IMR-90 (cell line): ENCODE measurements at regions of chr12 and their contacts with region 1.

Region 1: DNA sequence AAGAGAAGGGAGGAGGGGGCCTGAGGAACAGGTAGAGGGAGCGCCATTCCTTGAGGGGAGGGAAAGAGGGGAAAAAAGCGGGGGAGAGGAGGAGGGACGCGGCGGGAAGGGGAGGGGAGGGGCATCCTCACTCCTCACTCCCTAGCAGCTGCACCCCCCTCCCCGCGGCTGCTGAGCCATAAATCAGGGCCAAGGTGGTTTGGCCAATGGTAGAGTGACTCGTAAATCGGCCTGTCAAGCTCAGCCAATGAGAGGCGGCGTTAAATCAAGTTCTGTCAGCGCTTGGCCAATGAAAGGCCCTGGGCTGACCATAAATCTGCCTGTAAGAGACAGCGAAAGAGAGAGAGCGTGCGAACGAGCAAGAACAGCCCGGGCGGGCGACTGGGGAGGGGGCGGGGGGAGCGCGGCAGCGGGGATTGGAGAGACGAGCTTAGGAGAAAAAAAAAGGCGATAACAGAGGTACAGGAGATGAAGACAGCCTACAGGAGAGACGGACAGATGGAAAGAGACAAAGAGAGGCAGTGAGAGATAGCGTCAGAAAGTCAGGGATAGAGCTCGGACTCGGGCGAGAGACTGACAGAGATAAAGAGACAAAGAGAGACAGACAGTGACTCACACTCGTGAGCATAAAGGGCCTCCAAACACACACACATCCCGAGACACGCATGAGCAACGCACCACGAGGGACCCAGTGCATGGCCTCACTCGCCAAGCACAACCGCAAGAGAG is 5.1 kb downstream of the GPR84 start:
- DNase-seq: peak; percentile 100
- ATAC-seq: peak; percentile 89
- H3K4me3 ChIP-seq: peak overlapping the region; percentile 66
- H3K27ac ChIP-seq: peak overlapping the region; percentile 95
- H3K4me1 ChIP-seq: peaks cover 16% of the 10 kb centered on the region
- H3K27me3 ChIP-seq: no peaks in the 10 kb centered on the region
- CTCF ChIP-seq: no peak
- POLR2A ChIP-seq: peak; percentile 56; the same call in 1 of the 2 replicates
- RAD21 ChIP-seq: no peak

Region 2: GRCh38 chr12:54005853-54006686 is 353.1 kb before region 1 on chr12:
- CTCF ChIA-PET with region 1: no interaction called
- POLR2A ChIA-PET with region 1: no interaction called
- dilution Hi-C with region 1: no loop called
- in situ Hi-C with region 1: no loop called
- intact Hi-C with region 1: loop called (anchors 1 kb)
- DNase-seq: peak; percentile 62
- ATAC-seq: peak; percentile 93
- H3K4me3 ChIP-seq: no peak overlapping the region
- H3K27ac ChIP-seq: no peak overlapping the region
- H3K4me1 ChIP-seq: no peaks in the 10 kb centered on the region
- H3K27me3 ChIP-seq: peaks cover 90% of the 10 kb centered on the region
- CTCF ChIP-seq: peak; percentile 95
- POLR2A ChIP-seq: no peak
- RAD21 ChIP-seq: peak; percentile 93

Region 3: GRCh38 chr12:54220092-54220557 is 139.1 kb before region 1 on chr12:
- CTCF ChIA-PET with region 1: interaction called, 5 read pairs
- POLR2A ChIA-PET with region 1: no interaction called
- dilution Hi-C with region 1: no loop called
- in situ Hi-C with region 1: loop called (anchors 5 kb)
- intact Hi-C with region 1: loop called (anchors 1 kb)
- DNase-seq: peak; percentile 74
- ATAC-seq: peak; percentile 48
- H3K4me3 ChIP-seq: no peak overlapping the region
- H3K27ac ChIP-seq: no peak overlapping the region
- H3K4me1 ChIP-seq: peaks cover 20% of the 10 kb centered on the region
- H3K27me3 ChIP-seq: no peaks in the 10 kb centered on the region; the same call in 1 of the 2 replicates
- CTCF ChIP-seq: peak; percentile 81
- POLR2A ChIP-seq: no peak
- RAD21 ChIP-seq: peak; percentile 83

Region 4: DNA sequence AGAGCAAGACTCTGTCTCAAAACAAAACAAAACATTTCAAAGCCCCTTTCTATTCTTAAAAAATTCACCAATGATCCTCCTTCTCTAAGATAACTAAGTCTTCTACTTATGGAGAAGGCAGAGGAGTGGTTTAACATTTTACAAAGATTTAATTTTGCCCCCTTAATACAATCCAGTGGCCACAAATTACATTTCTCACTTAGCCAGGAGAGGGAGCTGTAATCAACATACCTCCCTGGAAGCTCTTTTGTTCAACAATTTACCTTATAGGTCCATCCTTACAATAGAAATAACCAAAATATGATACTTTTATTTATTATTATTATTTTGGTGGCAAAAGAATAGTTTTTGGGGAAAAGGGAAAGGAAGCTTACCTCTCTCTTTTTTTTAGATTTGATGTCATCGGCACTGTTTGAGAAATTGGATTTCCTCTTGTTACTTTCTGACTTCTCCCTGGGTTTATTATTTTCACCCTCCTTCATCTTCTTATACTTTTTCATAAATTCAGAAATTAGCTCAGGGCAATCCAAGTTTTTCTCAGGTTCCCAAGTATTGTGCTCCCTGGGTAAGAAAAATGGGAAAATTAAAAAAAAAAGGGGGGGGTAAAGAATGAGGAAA is 107.4 kb before region 1 on chr12:
- CTCF ChIA-PET with region 1: no interaction called
- POLR2A ChIA-PET with region 1: no interaction called
- dilution Hi-C with region 1: no loop called
- in situ Hi-C with region 1: no loop called
- intact Hi-C with region 1: loop called (anchors 1 kb)
- DNase-seq: peak; percentile 60
- ATAC-seq: peak; percentile 69
- H3K4me3 ChIP-seq: no peak overlapping the region
- H3K27ac ChIP-seq: no peak overlapping the region
- H3K4me1 ChIP-seq: no peaks in the 10 kb centered on the region
- H3K27me3 ChIP-seq: no peaks in the 10 kb centered on the region
- CTCF ChIP-seq: peak; percentile 78
- POLR2A ChIP-seq: no peak
- RAD21 ChIP-seq: peak; percentile 73

Region 5: GRCh38 chr12:54279866-54280467 is 79.2 kb before region 1 on chr12 and contains the start of gene CBX5:
- CTCF ChIA-PET with region 1: no interaction called
- POLR2A ChIA-PET with region 1: no interaction called
- dilution Hi-C with region 1: no loop called
- in situ Hi-C with region 1: no loop called
- intact Hi-C with region 1: loop called (anchors 1 kb)
- DNase-seq: peak; percentile 98
- ATAC-seq: peak; percentile 47
- H3K4me3 ChIP-seq: peak within 1 kb of the TSS; percentile 63
- H3K27ac ChIP-seq: peak within 1 kb of the TSS; percentile 82
- H3K4me1 ChIP-seq: peaks cover 3% of the 10 kb centered on the region
- H3K27me3 ChIP-seq: no peaks in the 10 kb centered on the region
- CTCF ChIP-seq: no peak
- POLR2A ChIP-seq: 0 out of 2 replicates have a peak, but pooled peaks have one; percentile 9
- RAD21 ChIP-seq: no peak
- total RNA-seq, gene CBX5: 40.9 and 66.9 TPM in 2 replicates

Region 6: GRCh38 chr12:54294152-54294952 is 64.8 kb before region 1 on chr12:
- CTCF ChIA-PET with region 1: interaction called, 3 read pairs
- POLR2A ChIA-PET with region 1: no interaction called
- dilution Hi-C with region 1: no loop called
- in situ Hi-C with region 1: loop called (anchors 5 kb)
- intact Hi-C with region 1: loop called (anchors 1 kb)
- DNase-seq: no peak
- ATAC-seq: peak; percentile 80
- H3K4me3 ChIP-seq: no peak overlapping the region
- H3K27ac ChIP-seq: no peak overlapping the region
- H3K4me1 ChIP-seq: no peaks in the 10 kb centered on the region
- H3K27me3 ChIP-seq: peaks cover 4% of the 10 kb centered on the region
- CTCF ChIP-seq: peak; percentile 69
- POLR2A ChIP-seq: no peak
- RAD21 ChIP-seq: peak; percentile 72

Region 7: GRCh38 chr12:54337280-54337842 is 21.8 kb before region 1 on chr12:
- CTCF ChIA-PET with region 1: interaction called, 5 read pairs
- POLR2A ChIA-PET with region 1: no interaction called
- dilution Hi-C with region 1: no loop called
- in situ Hi-C with region 1: no loop called
- intact Hi-C with region 1: loop called (anchors 2 kb)
- DNase-seq: no peak
- ATAC-seq: no peak
- H3K4me3 ChIP-seq: no peak overlapping the region
- H3K27ac ChIP-seq: no peak overlapping the region
- H3K4me1 ChIP-seq: peaks cover 40% of the 10 kb centered on the region
- H3K27me3 ChIP-seq: no peaks in the 10 kb centered on the region
- CTCF ChIP-seq: 0 out of 2 replicates have a peak, but pooled peaks have one; percentile 22
- POLR2A ChIP-seq: no peak
- RAD21 ChIP-seq: peak; percentile 28